ENCODE measurements at regions of chr11 and their contacts with region 1.

Region 1: GRCh38 chr11:18145025-18145424 is 12.7 kb downstream of the MRGPRX3 start:
- DNase-seq: no peak
- ATAC-seq: no peak
- H3K4me3 ChIP-seq: no peak overlapping the region
- H3K27ac ChIP-seq: no peak overlapping the region
- H3K4me1 ChIP-seq: no peaks in the 10 kb centered on the region
- H3K27me3 ChIP-seq: peaks cover 0 to 39% (median 18%) of the 10 kb centered on the region in 7 donors
- CTCF ChIP-seq: no peak

Region 2: GRCh38 chr11:18105802-18106574 is 39.0 kb before region 1 on chr11 and contains the start of gene SAAL1:
- intact Hi-C with region 1: no loop called
- DNase-seq: peak; percentile 85 to 90
- ATAC-seq: peak; percentile 97 to 99 (median 98)
- H3K4me3 ChIP-seq: peak within 1 kb of the TSS; percentile 79 to 99 (median 93)
- H3K27ac ChIP-seq: peak within 1 kb of the TSS in 9 of 10 donors; percentile 37 to 88 (median 76)
- H3K4me1 ChIP-seq: peaks cover 0 to 20% (median 14%) of the 10 kb centered on the region in 9 donors
- H3K27me3 ChIP-seq: peaks cover 0 to 13% (median 4%) of the 10 kb centered on the region in 7 donors
- CTCF ChIP-seq: peak; percentile 35 to 93 (median 72)
- total RNA-seq, gene SAAL1: 4.9 to 11.8 (median 7.1) TPM

Region 3: GRCh38 chr11:18168372-18168771 is 23.3 kb after region 1 on chr11:
- intact Hi-C with region 1: loop called in 1 of 10 experiments (anchors 1 kb)
- DNase-seq: no peak
- ATAC-seq: no peak
- H3K4me3 ChIP-seq: no peak overlapping the region
- H3K27ac ChIP-seq: no peak overlapping the region
- H3K4me1 ChIP-seq: no peaks in the 10 kb centered on the region
- H3K27me3 ChIP-seq: peaks cover 0 to 4% (median 0%) of the 10 kb centered on the region in 7 donors
- CTCF ChIP-seq: no peak